ACHN (cell line): ENCODE measurements at regions of chr6 and their contacts with region 1.

Region 1: DNA sequence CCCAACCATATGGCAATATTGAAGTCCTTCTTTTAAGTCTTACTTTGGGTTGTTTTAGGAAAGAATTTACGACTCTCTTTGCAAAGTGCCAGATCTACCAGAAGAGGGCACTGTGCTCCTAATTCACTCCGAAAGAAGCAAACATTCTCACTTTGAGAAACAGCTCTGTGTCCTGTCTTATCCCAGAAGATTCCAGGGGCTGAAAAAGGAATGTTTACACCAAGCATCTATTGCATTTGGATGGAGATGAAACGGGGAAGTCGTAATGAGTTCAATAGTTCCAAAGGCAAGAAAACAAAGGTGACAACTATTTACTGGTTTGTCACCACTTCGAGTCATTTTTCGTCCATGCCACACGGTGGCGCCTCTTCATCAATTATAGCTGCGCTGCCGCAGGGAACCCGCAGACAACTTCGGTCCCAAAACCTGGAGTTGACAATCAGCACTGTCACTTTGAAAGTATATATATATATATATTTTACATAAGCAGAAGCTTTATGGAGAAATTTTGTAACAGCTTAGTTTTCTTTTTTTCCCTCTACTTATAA is 121.6 kb downstream of the MOXD1 start:
- DNase-seq: peak; percentile 71

Region 2: DNA sequence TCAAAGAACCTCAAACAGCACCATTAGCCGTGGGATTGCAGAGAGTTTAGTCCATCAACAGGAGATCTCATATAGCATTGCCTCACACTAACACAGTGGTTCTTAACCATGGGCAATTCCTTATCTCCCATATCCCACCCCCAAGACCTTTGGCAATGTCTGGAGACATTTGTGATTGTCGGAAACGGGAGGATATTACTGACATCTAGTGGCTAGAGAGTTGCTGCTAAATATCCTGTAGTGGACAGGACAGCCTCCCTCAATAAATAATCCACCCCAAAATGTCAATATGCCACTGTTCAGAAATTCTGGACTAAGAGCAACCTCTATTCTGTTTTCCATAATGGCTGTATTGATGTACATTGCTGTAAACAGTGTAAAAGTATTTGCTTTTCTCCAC is 118.4 kb before region 1 on chr6:
- in situ Hi-C with region 1: no loop called
- DNase-seq: peak; percentile 42

Region 3: GRCh38 chr6:132483779-132484679 is 204.4 kb after region 1 on chr6:
- in situ Hi-C with region 1: loop called (anchors 25 kb)
- DNase-seq: peak; percentile 65